Gastrocnemius medialis (tissue), 4 donors: ENCODE measurements at regions of chr10 and their contacts with region 1.

Region 1: GRCh38 chr10:50624866-50625692 is 1.3 kb upstream of the SGMS1 start:
- DNase-seq: peak; percentile 48 to 61
- ATAC-seq: peak; percentile 54 to 59
- H3K4me3 ChIP-seq: peak overlapping the region; percentile 73 to 90 (median 84)
- H3K27ac ChIP-seq: peak overlapping the region; percentile 94 to 100 (median 98)
- H3K4me1 ChIP-seq: peaks cover 15 to 23% of the 10 kb centered on the region in 2 donors
- H3K27me3 ChIP-seq: no peaks in the 10 kb centered on the region
- CTCF ChIP-seq: peak; percentile 57 to 81 (median 70)
- POLR2A ChIP-seq: no peak

Region 2: GRCh38 chr10:50063100-50063499 is 562.0 kb before region 1 on chr10:
- in situ Hi-C with region 1: no loop called
- intact Hi-C with region 1: loop called (anchors 10 kb)
- DNase-seq: no peak
- ATAC-seq: no peak
- H3K4me3 ChIP-seq: no peak overlapping the region
- H3K27ac ChIP-seq: no peak overlapping the region
- H3K4me1 ChIP-seq: peaks cover 0 to 5% of the 10 kb centered on the region in 2 donors
- H3K27me3 ChIP-seq: no peaks in the 10 kb centered on the region
- CTCF ChIP-seq: no peak
- POLR2A ChIP-seq: no peak

Region 3: DNA sequence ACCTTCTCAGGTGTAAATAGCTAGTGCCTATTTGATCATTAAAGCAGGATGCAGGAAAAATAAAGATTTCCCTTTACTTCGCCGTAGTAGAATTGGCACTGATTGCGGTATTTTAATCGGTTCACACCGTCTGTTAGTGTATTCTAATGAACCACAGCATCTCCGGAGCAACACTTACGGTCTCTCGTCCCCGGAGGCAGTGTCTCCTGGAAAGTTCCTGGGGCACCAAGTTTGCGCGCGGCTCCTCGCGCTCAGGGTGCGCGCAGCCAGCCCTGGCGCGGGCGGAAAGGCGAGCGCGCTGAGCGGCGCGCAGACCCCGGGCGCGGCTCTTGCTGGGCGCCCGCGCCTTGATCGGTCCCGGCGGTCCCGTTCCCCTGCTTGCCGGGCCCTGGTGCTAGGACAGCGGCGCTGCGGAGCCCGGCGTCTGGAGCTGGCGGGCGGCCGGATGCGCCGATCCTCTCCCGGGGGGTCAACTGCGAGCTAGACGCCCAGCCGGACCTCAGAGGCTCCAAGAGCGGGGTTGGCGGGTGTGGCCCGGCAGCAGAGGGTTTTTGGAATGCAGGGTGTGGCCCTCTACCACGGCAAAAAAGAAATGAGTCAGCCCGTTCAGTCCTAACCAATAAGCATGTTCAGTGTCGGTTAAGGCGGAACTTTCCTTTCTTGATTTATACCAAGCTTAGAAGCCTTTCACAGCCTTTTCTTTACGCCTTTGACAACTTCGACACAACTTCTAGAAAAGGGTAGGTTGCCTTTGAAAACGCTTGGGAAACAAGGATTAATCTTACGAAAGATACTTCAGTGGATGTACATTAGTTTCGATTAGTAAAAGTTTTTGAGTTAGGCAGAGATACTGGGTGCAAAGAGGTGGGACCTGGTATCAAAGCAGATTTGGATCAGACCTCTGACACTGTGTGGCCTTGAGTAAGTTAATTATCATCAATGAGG is 206.9 kb before region 1 on chr10:
- in situ Hi-C with region 1: loop called in 1 of 4 experiments (anchors 25 kb)
- intact Hi-C with region 1: loop called (anchors 1 kb)
- DNase-seq: peak; percentile 39 to 48
- ATAC-seq: peak; percentile 81 to 85
- H3K4me3 ChIP-seq: peak overlapping the region; percentile 74 to 84 (median 76)
- H3K27ac ChIP-seq: peak overlapping the region; percentile 60 to 77 (median 66)
- H3K4me1 ChIP-seq: peaks cover 0 to 21% of the 10 kb centered on the region in 2 donors
- H3K27me3 ChIP-seq: no peaks in the 10 kb centered on the region
- CTCF ChIP-seq: peak in 1 of 5 experiments; percentile 11
- POLR2A ChIP-seq: no peak

Region 4: GRCh38 chr10:50988792-50989191 is 363.7 kb after region 1 on chr10:
- in situ Hi-C with region 1: no loop called
- intact Hi-C with region 1: loop called (anchors 2 kb)
- DNase-seq: no peak
- ATAC-seq: no peak
- H3K4me3 ChIP-seq: peak overlapping the region in 3 of 4 donors; percentile 20 to 77 (median 36)
- H3K27ac ChIP-seq: peak overlapping the region; percentile 96 to 99 (median 98)
- H3K4me1 ChIP-seq: peaks cover 11 to 17% of the 10 kb centered on the region in 2 donors
- H3K27me3 ChIP-seq: no peaks in the 10 kb centered on the region
- CTCF ChIP-seq: peak in 4 of 5 experiments; percentile 16 to 62 (median 52)
- POLR2A ChIP-seq: no peak

Region 5: DNA sequence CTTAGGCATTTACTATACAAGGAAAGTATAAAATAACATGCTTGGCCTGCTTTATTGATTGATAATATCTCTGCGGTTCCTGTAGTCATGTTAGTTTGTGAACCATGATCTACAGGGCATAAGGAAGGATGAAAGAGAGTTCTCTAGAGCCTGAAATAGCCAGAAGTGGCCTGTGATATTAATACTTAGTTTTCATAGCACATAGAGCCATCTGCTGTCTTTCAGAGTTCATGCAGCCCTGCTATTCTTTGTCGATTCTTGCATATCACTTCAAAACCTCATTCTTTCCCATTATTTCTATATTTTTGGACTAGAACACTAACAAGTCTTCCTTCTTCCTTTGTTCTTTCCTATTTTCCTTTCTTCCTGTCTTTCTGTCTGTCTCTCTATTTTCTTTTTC is 422.8 kb after region 1 on chr10:
- in situ Hi-C with region 1: no loop called
- intact Hi-C with region 1: no loop called
- DNase-seq: no peak
- ATAC-seq: no peak
- H3K4me3 ChIP-seq: no peak overlapping the region
- H3K27ac ChIP-seq: no peak overlapping the region
- H3K4me1 ChIP-seq: peaks cover 17 to 49% of the 10 kb centered on the region in 2 donors
- H3K27me3 ChIP-seq: no peaks in the 10 kb centered on the region
- CTCF ChIP-seq: peak in 1 of 5 experiments; percentile 15
- POLR2A ChIP-seq: no peak